ENCODE measurements at regions of chr5 and their contacts with region 1.

Region 1: GRCh38 chr5:167565032-167565954 is 726.2 kb upstream of the WWC1 start:
- DNase-seq: peak; percentile 24
- ATAC-seq: peak; percentile 42
- H3K4me3 ChIP-seq: no peak overlapping the region
- H3K27ac ChIP-seq: no peak overlapping the region
- H3K4me1 ChIP-seq: no peaks in the 10 kb centered on the region
- H3K27me3 ChIP-seq: peaks cover 81% of the 10 kb centered on the region
- CTCF ChIP-seq: peak; percentile 49

Region 2: DNA sequence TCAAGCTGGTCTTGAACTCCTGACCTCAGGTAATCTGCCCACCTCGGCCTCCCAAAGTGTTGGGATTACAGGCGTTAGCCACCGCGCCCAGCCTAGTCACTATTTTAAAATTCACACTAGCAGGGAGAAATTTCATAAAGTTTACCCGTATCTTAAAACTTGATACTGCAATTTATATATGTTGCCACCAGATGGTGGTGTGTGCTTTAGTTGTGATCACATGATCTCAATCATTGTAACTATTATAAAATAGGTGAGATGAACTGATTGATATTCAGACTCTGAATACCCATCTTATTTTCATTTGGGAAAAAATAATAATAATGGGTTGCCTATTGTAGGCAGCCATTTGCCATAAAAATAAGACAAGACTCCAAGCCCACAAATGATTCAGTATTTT is 604.3 kb before region 1 on chr5:
- CTCF ChIA-PET with region 1: no interaction called
- POLR2A ChIA-PET with region 1: no interaction called
- intact Hi-C with region 1: loop called (anchors 5 kb)
- DNase-seq: peak; percentile 41
- ATAC-seq: no peak
- H3K4me3 ChIP-seq: no peak overlapping the region
- H3K27ac ChIP-seq: no peak overlapping the region
- H3K4me1 ChIP-seq: no peaks in the 10 kb centered on the region
- H3K27me3 ChIP-seq: no peaks in the 10 kb centered on the region
- CTCF ChIP-seq: peak; percentile 50

Region 3: GRCh38 chr5:167592114-167592513 is 26.8 kb after region 1 on chr5:
- CTCF ChIA-PET with region 1: no interaction called
- POLR2A ChIA-PET with region 1: no interaction called
- intact Hi-C with region 1: no loop called
- DNase-seq: peak; percentile 35
- ATAC-seq: peak; percentile 64
- H3K4me3 ChIP-seq: no peak overlapping the region
- H3K27ac ChIP-seq: no peak overlapping the region
- H3K4me1 ChIP-seq: no peaks in the 10 kb centered on the region
- H3K27me3 ChIP-seq: peaks cover 62% of the 10 kb centered on the region
- CTCF ChIP-seq: no peak